ENCODE measurements at regions of chr17 and their contacts with region 1.

Region 1: DNA sequence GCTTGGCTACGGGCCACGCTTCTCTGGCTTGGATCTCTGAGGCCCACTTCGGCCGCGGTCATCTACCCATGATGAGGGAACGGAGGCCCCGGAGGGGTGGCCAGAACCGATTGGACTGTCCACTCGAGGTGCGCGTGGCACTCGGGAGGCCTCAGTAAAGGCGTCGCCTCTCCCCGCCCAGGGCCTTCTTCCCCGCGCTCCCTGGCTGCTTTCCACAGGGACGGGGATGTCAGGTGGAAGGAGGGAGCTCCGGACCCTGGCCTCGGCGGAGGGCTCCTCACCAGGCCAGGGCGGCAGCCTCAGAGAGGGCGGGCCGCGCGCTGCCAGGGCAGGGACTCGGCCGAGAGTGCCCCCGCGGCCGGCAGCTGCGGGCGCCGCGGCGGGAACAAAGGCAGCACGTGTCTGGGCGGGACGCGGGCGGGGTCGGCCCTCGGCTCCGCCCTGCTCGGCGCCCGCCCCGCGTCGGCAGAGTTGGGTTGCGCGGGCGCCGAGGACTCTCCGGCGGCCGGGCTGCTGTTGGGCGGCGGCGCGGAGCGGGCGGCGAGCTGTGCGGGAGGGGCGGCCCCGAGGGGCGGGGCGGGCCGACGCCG is 587 bp upstream of the CDK5R1 start:
- DNase-seq: peak; percentile 63
- ATAC-seq: peak; percentile 82
- H3K4me3 Mint-ChIP-seq: peak overlapping the region; percentile 52
- H3K27ac Mint-ChIP-seq: no peak overlapping the region
- H3K4me1 Mint-ChIP-seq: peaks cover 24% of the 10 kb centered on the region
- H3K27me3 Mint-ChIP-seq: peaks cover 8% of the 10 kb centered on the region

Region 2: GRCh38 chr17:32127158-32127897 is 358.9 kb before region 1 on chr17:
- CTCF ChIA-PET with region 1: no interaction called
- DNase-seq: peak; percentile 96
- ATAC-seq: peak; percentile 100
- H3K4me3 Mint-ChIP-seq: peak overlapping the region; percentile 93
- H3K27ac Mint-ChIP-seq: peak overlapping the region; percentile 96
- H3K4me1 Mint-ChIP-seq: peaks cover 33% of the 10 kb centered on the region
- H3K27me3 Mint-ChIP-seq: no peaks in the 10 kb centered on the region

Region 3: GRCh38 chr17:32191306-32191705 is 294.9 kb before region 1 on chr17:
- CTCF ChIA-PET with region 1: no interaction called
- DNase-seq: no peak
- ATAC-seq: no peak
- H3K4me3 Mint-ChIP-seq: no peak overlapping the region
- H3K27ac Mint-ChIP-seq: no peak overlapping the region
- H3K4me1 Mint-ChIP-seq: no peaks in the 10 kb centered on the region
- H3K27me3 Mint-ChIP-seq: no peaks in the 10 kb centered on the region

Region 4: DNA sequence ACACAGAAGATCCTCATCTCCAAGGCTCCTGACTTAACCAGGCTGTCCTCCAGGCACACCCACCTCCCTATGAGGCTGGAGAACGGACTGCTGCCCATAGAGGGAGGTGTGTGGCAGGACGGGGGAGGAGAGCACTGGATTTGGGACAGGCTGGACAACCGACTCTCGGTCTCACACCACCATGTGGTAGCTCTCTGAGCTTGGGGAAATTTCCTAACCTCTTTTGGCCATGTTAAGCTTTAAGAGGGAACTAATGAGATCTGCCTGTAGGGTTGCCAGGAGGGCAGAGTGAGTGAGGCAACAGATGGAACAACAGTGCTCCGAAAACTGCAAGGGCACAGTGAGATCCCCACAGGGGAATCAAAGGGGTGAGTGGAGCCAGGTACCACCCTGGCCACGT is 187.9 kb before region 1 on chr17:
- CTCF ChIA-PET with region 1: no interaction called
- DNase-seq: no peak
- ATAC-seq: no peak
- H3K4me3 Mint-ChIP-seq: no peak overlapping the region
- H3K27ac Mint-ChIP-seq: no peak overlapping the region
- H3K4me1 Mint-ChIP-seq: no peaks in the 10 kb centered on the region
- H3K27me3 Mint-ChIP-seq: peaks cover 2% of the 10 kb centered on the region

Region 5: GRCh38 chr17:32341857-32342602 is 144.2 kb before region 1 on chr17 and contains the start of gene C17orf75:
- CTCF ChIA-PET with region 1: no interaction called
- DNase-seq: peak; percentile 87
- ATAC-seq: peak; percentile 89
- H3K4me3 Mint-ChIP-seq: peak within 1 kb of the TSS; percentile 98
- H3K27ac Mint-ChIP-seq: peak within 1 kb of the TSS; percentile 88
- H3K4me1 Mint-ChIP-seq: peaks cover 34% of the 10 kb centered on the region
- H3K27me3 Mint-ChIP-seq: no peaks in the 10 kb centered on the region
- total RNA-seq, gene C17orf75: 32.3 to 39.0 TPM

Region 6: DNA sequence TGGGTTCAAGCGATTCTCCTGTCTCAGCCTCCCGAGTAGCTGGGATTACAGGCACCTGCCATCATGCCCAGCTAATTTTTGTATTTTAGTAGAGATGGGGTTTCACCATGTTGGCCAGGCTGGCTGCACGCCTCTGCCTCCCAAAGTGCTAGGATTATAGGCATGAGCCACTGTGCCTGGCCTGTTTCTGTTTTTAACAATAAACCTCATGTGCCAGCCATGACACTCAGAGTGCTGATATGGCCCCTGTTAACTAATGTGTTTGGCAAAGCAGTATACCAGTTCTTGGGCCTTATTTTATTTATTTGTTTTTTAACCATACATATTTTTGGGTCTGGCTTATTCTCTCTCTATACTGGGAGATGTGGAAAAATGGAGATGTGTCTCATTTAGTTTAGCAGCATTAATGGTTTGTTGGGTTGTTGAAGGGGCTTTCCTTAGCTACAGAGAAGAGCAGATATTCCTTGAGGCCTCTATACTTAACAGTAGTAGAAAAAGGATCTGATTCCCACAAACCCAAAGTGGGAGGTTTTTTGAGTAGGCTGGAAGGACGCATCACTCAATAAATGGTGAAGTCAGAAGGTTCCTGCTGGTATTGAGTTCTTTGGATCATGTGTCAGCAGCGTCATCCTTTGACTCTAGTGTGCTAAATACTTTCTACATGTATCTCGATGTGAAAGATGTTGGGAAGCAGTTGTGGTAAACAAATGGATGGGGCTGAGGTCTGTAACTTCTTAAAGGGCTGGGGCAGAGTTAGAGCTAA is 15.6 kb before region 1 on chr17:
- CTCF ChIA-PET with region 1: interaction called, 13 read pairs
- DNase-seq: no peak
- ATAC-seq: no peak
- H3K4me3 Mint-ChIP-seq: no peak overlapping the region
- H3K27ac Mint-ChIP-seq: no peak overlapping the region
- H3K4me1 Mint-ChIP-seq: no peaks in the 10 kb centered on the region
- H3K27me3 Mint-ChIP-seq: no peaks in the 10 kb centered on the region

Region 7: GRCh38 chr17:32523017-32523680 is 36.9 kb after region 1 on chr17:
- CTCF ChIA-PET with region 1: interaction called, 15 read pairs
- DNase-seq: peak; percentile 80
- ATAC-seq: peak; percentile 64
- H3K4me3 Mint-ChIP-seq: peak overlapping the region; percentile 48
- H3K27ac Mint-ChIP-seq: peak overlapping the region; percentile 88
- H3K4me1 Mint-ChIP-seq: peaks cover 61% of the 10 kb centered on the region
- H3K27me3 Mint-ChIP-seq: peaks cover 19% of the 10 kb centered on the region

Region 8: GRCh38 chr17:32609085-32609484 is 122.9 kb after region 1 on chr17:
- CTCF ChIA-PET with region 1: interaction called, 22 read pairs
- DNase-seq: peak; percentile 84
- ATAC-seq: peak; percentile 98
- H3K4me3 Mint-ChIP-seq: no peak overlapping the region
- H3K27ac Mint-ChIP-seq: no peak overlapping the region
- H3K4me1 Mint-ChIP-seq: peaks cover 8% of the 10 kb centered on the region
- H3K27me3 Mint-ChIP-seq: peaks cover 5% of the 10 kb centered on the region

Measured in activated CD8-positive, alpha-beta memory T cell treated with anti-CD3 and anti-CD28 coated beads, Interleukin-2, amount 10 ng/mL, durations not matched to agents 7 days and 5 days (primary cell).